ENCODE measurements at regions of chr17 and their contacts with region 1.

Region 1: DNA sequence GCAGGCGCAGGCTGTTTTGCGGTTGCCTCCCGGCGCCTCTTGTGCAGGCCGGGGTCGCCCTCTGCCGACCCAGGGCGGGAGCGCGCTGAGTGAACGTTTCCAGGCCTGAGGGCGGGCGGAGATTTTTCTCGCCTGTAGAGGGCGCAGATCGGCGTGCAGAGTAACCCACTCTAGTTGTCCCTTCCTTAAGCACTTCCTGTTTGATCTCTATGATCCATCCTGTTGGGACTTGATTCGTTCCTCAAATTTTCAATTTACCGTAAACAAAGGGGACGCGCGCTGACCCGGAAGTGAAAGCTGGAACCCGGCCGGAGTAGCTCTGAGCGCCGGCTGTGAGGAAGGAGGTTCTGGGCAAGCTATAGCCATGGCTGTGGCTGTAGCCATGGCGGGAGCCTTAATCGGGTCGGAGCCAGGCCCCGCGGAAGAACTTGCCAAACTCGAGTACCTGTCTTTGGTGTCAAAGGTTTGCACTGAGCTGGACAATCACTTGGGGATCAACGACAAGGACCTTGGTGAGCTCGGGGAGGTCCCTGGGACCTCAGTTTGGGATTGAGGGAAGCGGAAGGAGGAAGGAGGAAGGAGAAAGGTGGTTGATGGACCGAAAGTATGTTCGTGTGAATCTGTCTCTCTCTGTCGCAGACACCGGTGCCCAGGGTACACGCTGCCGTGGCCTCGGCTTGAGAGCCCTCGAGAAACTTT is at the start of gene DHX8:
- DNase-seq: peak; percentile 97 to 99 (median 98)
- H3K4me3 ChIP-seq: peak within 1 kb of the TSS; percentile 84 to 98
- H3K4me3 Mint-ChIP-seq: peak within 1 kb of the TSS; percentile 96 to 100 (median 100)
- H3K27ac ChIP-seq: peak within 1 kb of the TSS; percentile 78
- H3K27ac Mint-ChIP-seq: peak within 1 kb of the TSS; percentile 93 to 100 (median 99)
- H3K4me1 ChIP-seq: peaks cover 25% of the 10 kb centered on the region
- H3K4me1 Mint-ChIP-seq: peaks cover 17 to 39% (median 29%) of the 10 kb centered on the region in 4 donors
- H3K27me3 ChIP-seq: no peaks in the 10 kb centered on the region
- H3K27me3 Mint-ChIP-seq: peaks cover 0 to 1% of the 10 kb centered on the region in 2 donors
- total RNA-seq, gene DHX8: 75.8 to 78.2 TPM

Region 2: DNA sequence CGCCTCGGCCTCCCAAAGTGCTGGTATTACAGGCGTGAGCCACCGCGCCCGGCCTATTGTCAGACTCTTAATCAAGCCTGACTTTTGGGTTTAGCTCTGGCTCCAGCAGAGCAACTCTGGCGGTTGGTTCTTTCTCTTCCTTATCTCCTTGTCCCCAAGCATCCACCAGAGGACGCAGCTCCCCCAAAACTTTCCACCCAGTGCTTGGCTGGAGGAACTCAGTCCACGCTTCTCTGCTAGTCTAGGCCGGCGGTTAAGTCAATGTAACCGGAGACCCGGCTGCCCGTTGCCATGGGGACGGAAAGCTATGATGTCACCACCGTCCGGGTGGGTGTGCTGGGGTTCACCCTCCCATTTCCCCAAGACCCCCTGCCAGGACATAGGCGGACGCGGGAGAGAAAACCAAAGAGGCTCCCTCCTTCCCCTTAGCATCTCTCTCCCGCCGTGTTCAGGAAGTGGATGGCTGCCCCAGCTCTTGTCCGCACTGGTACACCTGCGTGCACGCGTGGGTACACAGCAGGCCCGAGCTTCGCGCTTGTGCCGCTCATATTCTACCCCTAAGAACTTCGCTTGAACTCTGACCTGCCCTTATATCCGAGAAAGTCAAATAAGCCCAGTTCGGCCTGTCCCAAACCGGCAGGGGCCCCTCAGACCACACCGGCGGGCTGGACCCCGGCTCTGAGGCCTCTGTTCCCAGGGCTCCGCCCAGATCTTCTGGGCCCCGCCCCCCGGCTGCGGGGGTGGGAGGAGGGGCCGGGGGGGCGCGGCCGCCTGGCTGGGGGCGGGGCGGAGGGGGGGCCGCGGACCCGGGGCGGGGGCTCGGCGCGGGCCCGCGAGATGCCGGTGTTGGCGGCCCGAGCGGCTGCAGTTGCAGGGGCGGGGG is 459.2 kb before region 1 on chr17 and contains the start of gene RND2:
- CTCF ChIA-PET with region 1: interaction called, 5 read pairs
- POLR2A ChIA-PET with region 1: no interaction called
- intact Hi-C with region 1: loop called (anchors 2 kb)
- DNase-seq: peak; percentile 79 to 90 (median 81)
- H3K4me3 ChIP-seq: peak within 1 kb of the TSS; percentile 65 to 81
- H3K4me3 Mint-ChIP-seq: peak within 1 kb of the TSS; percentile 87 to 95 (median 91)
- H3K27ac ChIP-seq: peak within 1 kb of the TSS; percentile 69
- H3K27ac Mint-ChIP-seq: peak within 1 kb of the TSS; percentile 86 to 98 (median 96)
- H3K4me1 ChIP-seq: peaks cover 32% of the 10 kb centered on the region
- H3K4me1 Mint-ChIP-seq: peaks cover 9 to 35% (median 27%) of the 10 kb centered on the region in 4 donors
- H3K27me3 ChIP-seq: no peaks in the 10 kb centered on the region
- H3K27me3 Mint-ChIP-seq: no peaks in the 10 kb centered on the region
- total RNA-seq, gene RND2: 0.28 to 0.29 TPM

Region 3: GRCh38 chr17:43170766-43171585 is 312.8 kb before region 1 on chr17 and contains the start of gene NBR1:
- CTCF ChIA-PET with region 1: interaction called, 3 read pairs
- POLR2A ChIA-PET with region 1: interaction called, 7 read pairs
- intact Hi-C with region 1: loop called (anchors 1 kb)
- DNase-seq: peak; percentile 97 to 99 (median 97)
- H3K4me3 ChIP-seq: peak within 1 kb of the TSS; percentile 80 to 85
- H3K4me3 Mint-ChIP-seq: no peak within 1 kb of the TSS
- H3K27ac ChIP-seq: peak within 1 kb of the TSS; percentile 99
- H3K27ac Mint-ChIP-seq: no peak within 1 kb of the TSS
- H3K4me1 ChIP-seq: peaks cover 40% of the 10 kb centered on the region
- H3K4me1 Mint-ChIP-seq: peaks cover 16 to 36% (median 23%) of the 10 kb centered on the region in 4 donors
- H3K27me3 ChIP-seq: no peaks in the 10 kb centered on the region
- H3K27me3 Mint-ChIP-seq: no peaks in the 10 kb centered on the region
- total RNA-seq, gene NBR1: 90.3 to 93.2 TPM

Region 4: DNA sequence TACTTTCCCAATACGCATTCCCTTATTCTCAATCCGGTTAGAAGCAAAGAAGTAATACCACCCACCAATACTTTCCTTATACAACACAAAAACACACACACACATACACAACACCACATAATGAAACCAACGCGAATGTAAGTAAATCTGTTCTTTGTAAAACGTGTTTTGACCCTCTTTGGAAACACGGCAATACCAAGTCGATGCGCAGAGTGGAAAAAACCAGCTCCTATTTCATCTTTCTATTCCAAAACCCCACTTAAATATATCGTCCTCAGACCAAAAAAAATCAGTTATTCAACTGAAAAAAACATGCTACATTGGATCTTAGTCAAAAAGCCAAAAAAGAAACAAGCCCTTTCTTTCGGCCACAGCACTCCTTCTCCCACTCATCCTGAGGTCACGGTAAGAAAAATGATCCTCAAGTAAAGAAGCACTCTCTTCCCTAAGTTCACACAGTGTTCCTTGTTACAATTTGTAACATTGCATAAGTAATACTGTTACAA is 116.0 kb before region 1 on chr17:
- CTCF ChIA-PET with region 1: interaction called, 33 read pairs
- POLR2A ChIA-PET with region 1: interaction called, 104 read pairs
- intact Hi-C with region 1: loop called (anchors 1 kb)
- DNase-seq: peak in 2 of 5 donors; percentile 60 to 87
- H3K4me3 ChIP-seq: peak overlapping the region; percentile 1 to 76
- H3K4me3 Mint-ChIP-seq: peak overlapping the region; percentile 91 to 98 (median 95)
- H3K27ac ChIP-seq: peak overlapping the region; percentile 91
- H3K27ac Mint-ChIP-seq: peak overlapping the region; percentile 99 to 100 (median 100)
- H3K4me1 ChIP-seq: peaks cover 22% of the 10 kb centered on the region
- H3K4me1 Mint-ChIP-seq: peaks cover 13 to 50% (median 35%) of the 10 kb centered on the region in 4 donors
- H3K27me3 ChIP-seq: no peaks in the 10 kb centered on the region
- H3K27me3 Mint-ChIP-seq: no peaks in the 10 kb centered on the region

Region 5: DNA sequence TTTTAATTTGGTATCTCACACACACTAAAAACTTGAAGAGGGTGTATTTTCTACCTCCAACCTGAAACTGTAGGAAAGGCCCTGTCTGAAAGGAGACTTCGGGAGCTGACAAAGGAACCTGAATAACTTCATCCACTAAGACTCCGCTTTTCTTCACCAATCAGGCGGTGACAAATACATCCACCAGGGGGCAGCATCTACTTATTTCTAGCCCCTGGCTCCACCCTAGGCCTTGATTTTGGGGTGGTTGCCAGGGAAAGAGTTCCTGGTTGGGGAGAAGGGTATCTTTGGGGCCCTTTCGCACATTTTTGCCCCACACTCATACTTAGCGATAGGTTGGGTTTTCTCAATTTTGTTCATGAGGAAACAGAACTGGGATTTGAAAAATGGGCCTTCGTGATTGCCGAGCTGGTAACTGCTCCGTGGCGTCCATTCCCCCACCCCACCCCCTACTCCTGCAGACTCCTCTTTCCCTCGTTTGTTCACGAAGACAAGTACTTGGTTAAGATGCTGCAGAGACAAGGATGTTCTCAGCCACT is 89.8 kb before region 1 on chr17:
- CTCF ChIA-PET with region 1: interaction called, 178 read pairs
- POLR2A ChIA-PET with region 1: interaction called, 136 read pairs
- intact Hi-C with region 1: loop called (anchors 1 kb)
- DNase-seq: peak; percentile 82 to 89 (median 86)
- H3K4me3 ChIP-seq: peak overlapping the region in 1 of 2 donors; percentile 30
- H3K4me3 Mint-ChIP-seq: peak overlapping the region in 4 of 8 donors; percentile 8 to 46 (median 30)
- H3K27ac ChIP-seq: no peak overlapping the region
- H3K27ac Mint-ChIP-seq: peak overlapping the region; percentile 27 to 73 (median 62)
- H3K4me1 ChIP-seq: peaks cover 41% of the 10 kb centered on the region
- H3K4me1 Mint-ChIP-seq: peaks cover 19 to 56% (median 35%) of the 10 kb centered on the region in 4 donors
- H3K27me3 ChIP-seq: no peaks in the 10 kb centered on the region
- H3K27me3 Mint-ChIP-seq: no peaks in the 10 kb centered on the region

Measured in CD4-positive, alpha-beta memory T cell (primary cell).